ENCODE measurements at regions of chr2 and their contacts with region 1.

Region 1: GRCh38 chr2:3558205-3559014 is at the start of gene RNASEH1:
- DNase-seq: peak; percentile 96 to 98
- H3K4me3 ChIP-seq: peak within 1 kb of the TSS; percentile 80 to 93 (median 81)
- H3K27ac ChIP-seq: peak within 1 kb of the TSS; percentile 73 to 88 (median 84)
- H3K4me1 ChIP-seq: peaks cover 12 to 20% of the 10 kb centered on the region in 2 donors
- H3K27me3 ChIP-seq: no peaks in the 10 kb centered on the region
- CTCF ChIP-seq: no peak
- POLR2A ChIP-seq: peak; percentile 20 to 82
- total RNA-seq, gene RNASEH1: 13.3 to 23.1 (median 19.2) TPM

Region 2: DNA sequence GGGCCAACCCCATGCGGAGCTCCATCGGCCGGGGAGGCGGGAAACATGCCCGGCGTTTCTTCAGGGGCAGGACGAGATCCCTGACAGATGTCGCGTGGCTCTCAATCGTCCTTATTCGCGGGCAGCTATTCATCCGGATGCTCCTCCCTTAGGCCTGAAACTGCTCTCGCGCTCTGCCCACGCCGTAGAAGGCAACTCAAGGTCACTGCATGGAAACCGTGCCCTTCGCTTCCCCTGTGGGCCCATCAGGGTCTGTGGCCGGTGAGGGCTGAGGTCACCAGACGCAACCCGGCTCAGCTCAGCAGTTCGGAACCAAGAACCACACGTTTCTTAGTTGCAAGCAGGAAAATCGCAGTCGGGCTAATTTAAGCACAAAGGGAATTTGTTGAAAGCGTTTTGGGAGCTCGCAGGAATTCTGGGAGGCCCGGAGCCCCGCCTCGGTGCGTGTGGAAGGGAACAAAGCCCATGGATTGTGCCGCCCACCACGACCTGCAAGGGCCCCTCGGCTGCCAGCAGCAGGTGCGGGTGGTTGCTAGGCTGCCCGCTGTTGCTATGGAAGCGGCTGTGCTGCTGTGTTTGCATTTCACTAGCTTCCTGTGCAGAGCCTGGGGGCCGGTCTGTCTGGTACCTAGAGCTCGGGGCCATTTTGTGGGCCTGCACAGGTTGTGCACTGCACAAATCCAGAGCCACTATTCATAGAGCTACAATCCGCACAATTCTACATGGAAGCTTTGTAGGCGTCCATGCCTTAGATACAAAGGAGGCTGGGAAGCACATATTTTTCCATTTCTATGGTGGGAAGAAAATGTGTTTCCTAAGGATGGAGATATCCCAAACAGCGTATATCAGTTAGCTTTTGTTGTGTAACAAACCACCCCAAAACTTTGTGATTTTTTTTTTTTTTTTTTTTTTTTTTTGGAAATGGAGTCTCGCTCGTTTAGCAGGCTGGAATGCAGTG is 93.6 kb after region 1 on chr2:
- intact Hi-C with region 1: loop called (anchors 10 kb)
- DNase-seq: peak; percentile 12 to 30
- H3K4me3 ChIP-seq: no peak overlapping the region
- H3K27ac ChIP-seq: peak overlapping the region in 1 of 3 donors; percentile 63
- H3K4me1 ChIP-seq: peaks cover 5 to 17% of the 10 kb centered on the region in 2 donors
- H3K27me3 ChIP-seq: no peaks in the 10 kb centered on the region
- CTCF ChIP-seq: no peak
- POLR2A ChIP-seq: no peak

Measured in thyroid gland (tissue), 4 donors.